MCF 10A (cell line): ENCODE measurements at regions of chr18 and their contacts with region 1.

Region 1: GRCh38 chr18:3245853-3246634 is 1.6 kb upstream of the MYL12A start:
- DNase-seq: peak; percentile 89
- H3K4me3 Mint-ChIP-seq: peak overlapping the region; percentile 86
- H3K27ac Mint-ChIP-seq: peak overlapping the region; percentile 100
- H3K4me1 Mint-ChIP-seq: peaks cover 22% of the 10 kb centered on the region
- H3K27me3 Mint-ChIP-seq: no peaks in the 10 kb centered on the region
- CTCF ChIP-seq: peak; percentile 97

Region 2: DNA sequence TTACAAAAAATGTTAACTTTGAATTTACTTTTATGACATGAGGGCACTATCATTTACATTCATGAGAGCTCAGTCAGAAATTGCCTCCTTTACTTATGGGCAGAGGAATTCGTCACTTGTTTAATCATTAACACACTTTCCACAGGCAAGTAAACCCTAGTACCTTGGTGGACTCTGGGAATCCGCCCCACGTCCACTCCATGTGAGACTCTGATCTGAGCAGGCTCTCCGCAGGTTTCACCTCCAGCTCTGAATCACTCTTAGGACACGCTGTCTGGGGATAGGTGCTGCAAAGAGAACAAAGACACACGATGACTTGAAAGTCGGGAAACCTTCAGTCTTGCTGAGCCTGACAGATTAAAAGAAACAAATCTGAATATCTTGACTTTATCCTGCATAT is 306.7 kb before region 1 on chr18:
- CTCF ChIA-PET with region 1: interaction called, 103 read pairs
- POLR2A ChIA-PET with region 1: interaction called, 35 read pairs
- intact Hi-C with region 1: no loop called
- DNase-seq: no peak
- H3K4me3 Mint-ChIP-seq: no peak overlapping the region
- H3K27ac Mint-ChIP-seq: no peak overlapping the region
- H3K4me1 Mint-ChIP-seq: peaks cover 10% of the 10 kb centered on the region
- H3K27me3 Mint-ChIP-seq: no peaks in the 10 kb centered on the region
- CTCF ChIP-seq: no peak

Region 3: GRCh38 chr18:3012964-3013804 is 232.9 kb before region 1 on chr18 and contains the start of gene LPIN2:
- CTCF ChIA-PET with region 1: interaction called, 6 read pairs
- POLR2A ChIA-PET with region 1: interaction called, 4 read pairs
- intact Hi-C with region 1: loop called (anchors 1 kb)
- DNase-seq: peak; percentile 97
- H3K4me3 Mint-ChIP-seq: peak within 1 kb of the TSS; percentile 82
- H3K27ac Mint-ChIP-seq: peak within 1 kb of the TSS; percentile 92
- H3K4me1 Mint-ChIP-seq: peaks cover 21% of the 10 kb centered on the region
- H3K27me3 Mint-ChIP-seq: no peaks in the 10 kb centered on the region
- CTCF ChIP-seq: no peak
- total RNA-seq, gene LPIN2: 13.1 and 15.9 TPM in 2 replicates

Region 4: DNA sequence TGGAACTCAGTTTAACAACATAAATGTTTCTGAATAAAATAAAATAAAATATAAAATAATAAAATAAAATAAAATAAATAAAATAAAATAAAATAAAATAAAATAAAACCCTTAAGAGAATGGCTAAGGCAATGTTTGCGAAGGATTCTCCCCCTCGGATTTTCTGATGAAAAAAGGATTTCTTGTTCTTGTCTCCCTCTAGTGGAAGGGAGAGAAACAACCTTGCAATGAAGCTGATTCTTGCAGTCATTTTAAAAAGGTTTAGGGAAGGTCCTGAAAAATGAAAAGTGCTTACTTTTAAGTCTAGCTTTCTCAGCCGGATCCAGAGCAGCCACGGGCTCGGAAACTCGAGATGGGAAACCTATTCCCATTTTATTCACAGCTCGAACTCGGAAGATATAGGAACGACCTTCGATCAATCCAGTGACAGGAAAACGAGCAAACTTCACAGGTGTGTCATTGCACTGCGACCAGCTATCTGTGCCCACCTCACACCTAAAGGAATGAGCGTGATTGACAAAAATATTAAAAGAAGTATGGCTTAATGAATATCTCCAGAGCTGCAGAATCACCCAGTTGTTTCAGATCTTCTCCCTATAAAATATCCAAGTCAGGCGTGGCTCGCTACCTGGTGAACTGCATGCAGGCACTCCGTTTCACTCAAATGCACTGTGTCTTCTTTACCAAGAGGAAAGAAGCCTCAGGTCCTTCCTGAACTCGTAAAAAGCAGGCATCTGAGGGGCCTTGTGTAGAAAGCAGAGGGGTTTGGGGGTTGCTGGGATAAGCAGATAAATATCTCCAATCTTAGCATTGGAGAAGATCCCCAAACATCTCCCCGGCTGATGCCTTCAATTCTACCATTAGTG is 94.4 kb before region 1 on chr18:
- CTCF ChIA-PET with region 1: interaction called, 35 read pairs
- POLR2A ChIA-PET with region 1: interaction called, 23 read pairs
- intact Hi-C with region 1: loop called (anchors 1 kb)
- DNase-seq: peak; percentile 50
- H3K4me3 Mint-ChIP-seq: no peak overlapping the region
- H3K27ac Mint-ChIP-seq: peak overlapping the region; percentile 77
- H3K4me1 Mint-ChIP-seq: peaks cover 54% of the 10 kb centered on the region
- H3K27me3 Mint-ChIP-seq: no peaks in the 10 kb centered on the region
- CTCF ChIP-seq: peak; percentile 71

Region 5: DNA sequence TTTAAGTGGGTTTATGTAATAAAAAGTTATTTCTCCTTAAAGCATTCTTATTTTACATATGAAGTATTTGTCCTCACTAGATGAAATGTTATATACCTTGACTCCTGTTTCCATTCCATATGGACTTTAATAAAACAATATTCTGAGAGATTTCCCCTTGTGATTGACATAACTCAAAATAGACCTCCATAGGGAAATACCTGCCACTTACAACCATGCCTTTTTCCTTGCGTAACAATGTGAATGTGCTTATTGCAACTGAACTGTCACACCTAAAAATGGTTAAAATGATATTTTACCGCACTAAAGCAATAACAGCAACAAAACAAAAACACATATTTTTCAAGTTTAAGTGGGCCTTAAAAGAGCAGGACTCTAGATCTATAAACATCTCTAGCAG is 133.6 kb after region 1 on chr18:
- CTCF ChIA-PET with region 1: no interaction called
- POLR2A ChIA-PET with region 1: no interaction called
- intact Hi-C with region 1: no loop called
- DNase-seq: no peak
- H3K4me3 Mint-ChIP-seq: no peak overlapping the region
- H3K27ac Mint-ChIP-seq: no peak overlapping the region
- H3K4me1 Mint-ChIP-seq: no peaks in the 10 kb centered on the region
- H3K27me3 Mint-ChIP-seq: no peaks in the 10 kb centered on the region
- CTCF ChIP-seq: no peak

Region 6: GRCh38 chr18:3447895-3448837 is 202.1 kb after region 1 on chr18:
- CTCF ChIA-PET with region 1: interaction called, 3 read pairs
- POLR2A ChIA-PET with region 1: interaction called, 93 read pairs
- intact Hi-C with region 1: no loop called
- DNase-seq: peak; percentile 98
- H3K4me3 Mint-ChIP-seq: peak overlapping the region; percentile 95
- H3K27ac Mint-ChIP-seq: peak overlapping the region; percentile 99
- H3K4me1 Mint-ChIP-seq: peaks cover 12% of the 10 kb centered on the region
- H3K27me3 Mint-ChIP-seq: no peaks in the 10 kb centered on the region
- CTCF ChIP-seq: no peak